ENCODE measurements at regions of chr7 and their contacts with region 1.

Region 1: GRCh38 chr7:142508258-142508689 is 241.0 kb upstream of the PRSS1 start:
- DNase-seq: peak; percentile 44
- H3K4me3 Mint-ChIP-seq: no peak overlapping the region
- H3K27ac Mint-ChIP-seq: peak overlapping the region; percentile 79
- H3K4me1 Mint-ChIP-seq: peaks cover 43% of the 10 kb centered on the region
- H3K27me3 Mint-ChIP-seq: no peaks in the 10 kb centered on the region

Region 2: GRCh38 chr7:142485617-142486226 is 22.6 kb before region 1 on chr7:
- CTCF ChIA-PET with region 1: interaction called, 6 read pairs
- intact Hi-C with region 1: loop called (anchors 1 kb)
- DNase-seq: peak; percentile 61
- H3K4me3 Mint-ChIP-seq: no peak overlapping the region
- H3K27ac Mint-ChIP-seq: peak overlapping the region; percentile 8
- H3K4me1 Mint-ChIP-seq: peaks cover 44% of the 10 kb centered on the region
- H3K27me3 Mint-ChIP-seq: no peaks in the 10 kb centered on the region

Measured in activated naive CD4-positive, alpha-beta T cell treated with anti-CD3 and anti-CD28 coated beads for 36 hours (primary cell).